ENCODE measurements at regions of chrX and their contacts with region 1.

Region 1: GRCh38 chrX:104351173-104351769 is 96.5 kb upstream of the ESX1 start:
- DNase-seq: peak; percentile 23
- H3K4me3 Mint-ChIP-seq: no peak overlapping the region
- H3K27ac Mint-ChIP-seq: peak overlapping the region; percentile 70
- H3K4me1 Mint-ChIP-seq: peaks cover 40% of the 10 kb centered on the region
- H3K27me3 Mint-ChIP-seq: no peaks in the 10 kb centered on the region
- CTCF ChIP-seq: no peak

Region 2: GRCh38 chrX:104391906-104392305 is 40.6 kb after region 1 on chrX:
- CTCF ChIA-PET with region 1: no interaction called
- intact Hi-C with region 1: no loop called
- DNase-seq: no peak
- H3K4me3 Mint-ChIP-seq: no peak overlapping the region
- H3K27ac Mint-ChIP-seq: no peak overlapping the region
- H3K4me1 Mint-ChIP-seq: no peaks in the 10 kb centered on the region
- H3K27me3 Mint-ChIP-seq: no peaks in the 10 kb centered on the region
- CTCF ChIP-seq: no peak

Region 3: DNA sequence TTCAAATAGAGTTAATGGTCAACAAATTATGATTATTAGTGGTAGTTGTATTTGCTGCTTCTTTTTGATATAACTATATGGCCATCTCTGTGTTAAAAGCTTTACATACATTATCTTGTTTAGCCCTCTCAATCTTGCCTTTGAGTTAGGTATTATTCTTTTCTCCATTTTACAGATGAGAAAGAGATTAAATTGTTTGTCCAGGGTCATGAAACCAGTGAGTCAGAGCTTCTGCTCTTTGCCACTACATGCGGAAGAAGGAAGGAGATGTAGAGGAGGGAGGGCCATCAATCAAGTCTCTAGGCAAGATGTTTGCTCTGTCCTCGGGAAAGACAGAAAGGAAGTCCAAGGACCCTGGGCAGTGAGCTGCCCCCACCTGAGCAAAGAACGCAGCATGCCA is 81.0 kb after region 1 on chrX:
- CTCF ChIA-PET with region 1: no interaction called
- intact Hi-C with region 1: loop called (anchors 5 kb)
- DNase-seq: peak; percentile 55
- H3K4me3 Mint-ChIP-seq: no peak overlapping the region
- H3K27ac Mint-ChIP-seq: peak overlapping the region; percentile 92
- H3K4me1 Mint-ChIP-seq: peaks cover 36% of the 10 kb centered on the region
- H3K27me3 Mint-ChIP-seq: no peaks in the 10 kb centered on the region
- CTCF ChIP-seq: no peak